Activated CD4-positive, alpha-beta T cell treated with anti-CD3 and anti-CD28 coated beads, Interleukin-2, amount 10 ng/mL, durations not matched to agents 24 days and 14 days (primary cell): ENCODE measurements at regions of chr4 and their contacts with region 1.

Region 1: DNA sequence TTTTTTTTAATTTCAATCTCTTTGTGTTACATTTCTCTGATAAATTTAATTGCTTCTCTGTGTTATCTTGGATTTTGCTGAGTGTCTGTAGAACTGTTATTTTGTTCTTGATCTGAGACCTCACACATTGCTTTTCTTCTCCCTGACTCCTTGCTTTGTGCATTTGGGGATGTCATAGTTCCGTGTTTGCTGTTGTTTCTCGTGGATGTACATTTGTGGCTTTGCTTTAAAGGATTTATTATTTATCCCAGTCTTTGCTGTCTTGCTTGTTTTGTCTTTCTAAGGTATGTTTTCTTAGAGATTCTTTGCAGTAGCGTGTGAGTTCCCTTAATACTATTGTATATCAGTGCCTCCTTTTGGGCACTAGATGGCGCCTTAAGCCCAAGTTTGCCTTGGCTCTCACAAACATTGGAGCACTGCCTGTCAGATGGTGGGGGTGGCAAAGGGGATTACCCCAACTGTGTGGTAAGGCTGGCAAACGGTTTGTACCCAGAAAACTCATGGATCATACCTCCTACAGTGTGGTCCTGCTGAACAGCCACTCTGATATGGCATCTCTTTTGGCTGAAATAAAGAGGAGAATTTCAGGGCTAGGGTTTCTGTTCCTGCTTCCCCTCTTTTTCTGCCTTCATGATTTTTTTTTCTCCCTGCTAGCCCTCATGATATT is 96.4 kb downstream of the PGRMC2 start:
- DNase-seq: peak; percentile 89
- H3K4me3 Mint-ChIP-seq: no peak overlapping the region
- H3K27ac Mint-ChIP-seq: no peak overlapping the region
- H3K4me1 Mint-ChIP-seq: peaks cover 11% of the 10 kb centered on the region
- H3K27me3 Mint-ChIP-seq: no peaks in the 10 kb centered on the region

Region 2: GRCh38 chr4:127748957-127749356 is 442.3 kb before region 1 on chr4:
- intact Hi-C with region 1: no loop called
- DNase-seq: no peak
- H3K4me3 Mint-ChIP-seq: no peak overlapping the region
- H3K27ac Mint-ChIP-seq: no peak overlapping the region
- H3K4me1 Mint-ChIP-seq: no peaks in the 10 kb centered on the region
- H3K27me3 Mint-ChIP-seq: peaks cover under 1% of the 10 kb centered on the region

Region 3: GRCh38 chr4:128220286-128221235 is 29.3 kb after region 1 on chr4:
- intact Hi-C with region 1: loop called (anchors 2 kb)
- DNase-seq: no peak
- H3K4me3 Mint-ChIP-seq: no peak overlapping the region
- H3K27ac Mint-ChIP-seq: no peak overlapping the region
- H3K4me1 Mint-ChIP-seq: no peaks in the 10 kb centered on the region
- H3K27me3 Mint-ChIP-seq: no peaks in the 10 kb centered on the region

Region 4: GRCh38 chr4:128454281-128455075 is 263.2 kb after region 1 on chr4:
- intact Hi-C with region 1: loop called (anchors 5 kb)
- DNase-seq: peak; percentile 84
- H3K4me3 Mint-ChIP-seq: no peak overlapping the region
- H3K27ac Mint-ChIP-seq: no peak overlapping the region
- H3K4me1 Mint-ChIP-seq: peaks cover 7% of the 10 kb centered on the region
- H3K27me3 Mint-ChIP-seq: no peaks in the 10 kb centered on the region

Region 5: GRCh38 chr4:128558896-128559679 is 367.8 kb after region 1 on chr4:
- intact Hi-C with region 1: loop called (anchors 10 kb)
- DNase-seq: no peak
- H3K4me3 Mint-ChIP-seq: no peak overlapping the region
- H3K27ac Mint-ChIP-seq: no peak overlapping the region
- H3K4me1 Mint-ChIP-seq: peaks cover under 1% of the 10 kb centered on the region
- H3K27me3 Mint-ChIP-seq: peaks cover 1% of the 10 kb centered on the region

Region 6: DNA sequence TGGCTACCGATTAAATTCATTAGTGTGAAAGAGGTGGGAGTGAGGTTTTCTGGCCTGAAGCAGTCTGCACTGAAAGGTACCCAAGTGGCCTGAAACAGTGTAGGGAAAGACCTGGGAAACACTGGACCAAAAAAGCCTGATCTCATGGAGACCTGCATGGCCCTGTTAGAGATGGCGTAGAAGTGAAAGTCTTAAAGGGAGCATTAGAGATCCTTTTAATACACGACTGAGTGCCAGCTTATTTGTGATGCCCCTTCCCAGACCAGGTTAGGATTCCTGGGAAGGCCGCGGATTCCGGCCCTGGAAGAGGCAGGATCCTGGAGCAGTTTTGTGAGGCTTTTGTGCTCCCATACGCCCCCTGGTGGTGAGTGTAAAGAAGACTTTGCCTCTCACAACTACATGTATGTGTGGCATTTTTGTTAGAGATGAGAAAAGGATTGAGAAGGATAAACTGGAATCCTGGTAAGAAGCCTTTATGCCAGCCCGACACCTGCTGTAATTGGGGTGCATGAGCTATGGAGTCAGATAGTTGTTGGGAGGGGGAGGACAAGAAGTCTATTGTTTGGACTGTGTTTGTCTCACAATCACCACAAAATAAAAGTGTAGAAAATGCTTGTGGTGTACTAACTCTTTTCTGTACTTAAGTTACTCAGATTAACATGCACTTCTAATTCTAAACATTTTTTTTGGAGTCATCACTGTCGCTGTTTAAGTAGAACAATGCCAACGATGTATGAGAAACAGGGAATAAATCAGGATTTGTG is 672.2 kb after region 1 on chr4:
- intact Hi-C with region 1: loop called (anchors 2 kb)
- DNase-seq: peak; percentile 88
- H3K4me3 Mint-ChIP-seq: peak overlapping the region; percentile 42
- H3K27ac Mint-ChIP-seq: peak overlapping the region; percentile 86
- H3K4me1 Mint-ChIP-seq: peaks cover 44% of the 10 kb centered on the region
- H3K27me3 Mint-ChIP-seq: no peaks in the 10 kb centered on the region

Region 7: GRCh38 chr4:129362674-129363274 is 1171.5 kb after region 1 on chr4:
- intact Hi-C with region 1: loop called (anchors 1 kb)
- DNase-seq: peak; percentile 84
- H3K4me3 Mint-ChIP-seq: no peak overlapping the region
- H3K27ac Mint-ChIP-seq: no peak overlapping the region
- H3K4me1 Mint-ChIP-seq: no peaks in the 10 kb centered on the region
- H3K27me3 Mint-ChIP-seq: peaks cover 5% of the 10 kb centered on the region

Region 8: GRCh38 chr4:129641179-129641578 is 1449.9 kb after region 1 on chr4:
- intact Hi-C with region 1: loop called (anchors 10 kb)
- DNase-seq: peak; percentile 85
- H3K4me3 Mint-ChIP-seq: no peak overlapping the region
- H3K27ac Mint-ChIP-seq: no peak overlapping the region
- H3K4me1 Mint-ChIP-seq: no peaks in the 10 kb centered on the region
- H3K27me3 Mint-ChIP-seq: no peaks in the 10 kb centered on the region